ENCODE measurements at regions of chr2 and their contacts with region 1.

Region 1: GRCh38 chr2:55175254-55176025 is 56.7 kb downstream of the CLHC1 start:
- DNase-seq: peak; percentile 75 to 87
- ATAC-seq: peak; percentile 90 to 95
- H3K4me3 ChIP-seq: no peak overlapping the region
- H3K27ac ChIP-seq: no peak overlapping the region
- H3K4me1 ChIP-seq: peaks cover 4% of the 10 kb centered on the region; the same call in 1 of the 3 replicates
- CTCF ChIP-seq: peak; percentile 95
- EP300 ChIP-seq: no peak
- POLR2A ChIP-seq: no peak
- RAD21 ChIP-seq: peak; percentile 95 to 98

Region 2: DNA sequence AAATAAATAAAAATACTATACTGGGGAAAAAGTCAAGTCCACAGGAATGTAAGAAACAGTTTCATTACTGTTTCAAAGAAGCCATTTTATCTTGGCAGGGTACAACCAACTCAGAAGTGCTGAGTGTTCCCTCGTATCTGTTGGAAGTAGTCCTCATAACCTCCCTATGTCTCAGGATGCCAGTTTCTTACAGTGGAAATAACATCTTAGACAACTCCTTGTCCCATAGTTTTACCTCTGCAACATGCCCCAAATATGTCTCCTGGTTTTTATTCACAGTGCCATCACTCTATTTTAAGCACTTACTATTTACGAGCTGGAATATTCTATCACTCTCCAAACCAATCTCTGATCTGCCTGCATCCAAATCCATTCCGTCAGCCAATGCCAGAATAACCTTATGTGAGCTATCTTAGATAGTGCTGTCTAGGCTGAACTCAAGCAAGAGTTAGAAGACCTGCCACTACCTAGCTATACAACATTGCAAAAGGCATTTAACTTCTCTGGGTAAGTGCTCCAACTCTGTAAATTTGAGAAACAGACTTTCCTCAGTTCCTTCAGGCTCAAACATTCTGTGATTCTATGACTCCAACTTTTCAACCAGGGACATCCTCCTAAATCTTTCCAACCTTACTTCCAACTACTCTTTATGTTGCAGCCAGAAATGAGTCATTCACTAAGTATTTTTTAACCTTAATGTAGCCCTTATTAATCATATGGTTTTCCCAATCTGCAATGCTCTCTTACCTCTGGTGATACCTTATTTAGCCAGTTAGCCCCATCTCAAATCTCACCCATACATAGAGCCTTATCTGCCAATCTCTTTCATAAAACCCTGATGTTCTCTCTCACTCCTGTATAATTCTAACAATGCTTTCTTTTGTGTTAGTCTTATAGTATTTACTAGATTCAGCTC is 191.8 kb before region 1 on chr2:
- CTCF ChIA-PET with region 1: no interaction called
- POLR2A ChIA-PET with region 1: no interaction called
- DNase-seq: no peak
- ATAC-seq: peak; percentile 46 to 56; a peak in 3 of 6 replicates
- H3K4me3 ChIP-seq: no peak overlapping the region
- H3K27ac ChIP-seq: 0 out of 6 replicates have a peak overlapping the region, but pooled peaks of 1 of the 2 experiments have one; percentile 0
- H3K4me1 ChIP-seq: peaks cover 53% of the 10 kb centered on the region
- CTCF ChIP-seq: no peak
- EP300 ChIP-seq: no peak
- POLR2A ChIP-seq: no peak
- RAD21 ChIP-seq: no peak

Region 3: GRCh38 chr2:55026202-55026601 is 149.2 kb before region 1 on chr2:
- CTCF ChIA-PET with region 1: interaction called, 351 read pairs
- POLR2A ChIA-PET with region 1: no interaction called
- DNase-seq: no peak
- ATAC-seq: peak; percentile 23 to 27; a peak in 3 of 6 replicates
- H3K4me3 ChIP-seq: no peak overlapping the region
- H3K27ac ChIP-seq: no peak overlapping the region
- H3K4me1 ChIP-seq: peaks cover 49% of the 10 kb centered on the region
- CTCF ChIP-seq: no peak
- EP300 ChIP-seq: no peak
- POLR2A ChIP-seq: no peak
- RAD21 ChIP-seq: no peak

Region 4: GRCh38 chr2:55111570-55112228 is 63.7 kb before region 1 on chr2:
- CTCF ChIA-PET with region 1: interaction called, 148 read pairs
- POLR2A ChIA-PET with region 1: no interaction called
- DNase-seq: peak; percentile 44 to 84
- ATAC-seq: peak; percentile 74 to 75
- H3K4me3 ChIP-seq: no peak overlapping the region
- H3K27ac ChIP-seq: peak overlapping the region; percentile 92 to 93
- H3K4me1 ChIP-seq: peaks cover 94% of the 10 kb centered on the region
- CTCF ChIP-seq: no peak
- EP300 ChIP-seq: no peak
- POLR2A ChIP-seq: no peak
- RAD21 ChIP-seq: peak in 1 of 2 experiments; percentile 41; a peak in 2 of 5 replicates

Region 5: DNA sequence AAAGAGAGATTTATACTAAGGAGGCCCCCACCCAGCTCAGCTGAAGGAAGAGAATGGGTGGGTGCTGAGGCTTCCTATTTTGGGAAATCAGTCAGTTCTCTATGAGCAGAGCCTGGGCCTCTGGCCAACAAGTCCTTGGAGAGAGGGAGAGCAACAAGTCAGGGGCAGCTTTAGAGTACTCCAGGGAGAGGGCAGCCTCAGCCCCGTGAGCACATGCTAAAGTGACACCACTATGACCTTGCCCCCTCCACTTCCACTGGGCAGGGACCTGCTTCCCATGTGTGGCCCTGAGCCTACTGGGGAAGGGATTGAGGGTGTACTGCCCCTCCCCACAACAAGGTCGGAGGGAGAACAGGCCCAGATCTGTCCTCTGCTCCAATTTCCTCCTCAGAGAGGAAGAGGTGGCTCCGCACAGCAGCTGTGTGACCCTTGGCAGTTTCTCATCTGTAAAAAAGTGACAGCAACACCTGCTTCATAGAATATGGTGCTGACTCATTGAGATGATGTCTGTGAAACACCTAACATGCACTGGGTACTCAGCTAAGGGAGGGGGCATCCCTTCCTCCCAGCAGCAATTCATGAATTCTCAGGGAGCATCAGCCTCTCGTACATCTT is 16.3 kb before region 1 on chr2:
- CTCF ChIA-PET with region 1: interaction called, 127 read pairs
- POLR2A ChIA-PET with region 1: no interaction called
- DNase-seq: no peak
- ATAC-seq: no peak
- H3K4me3 ChIP-seq: no peak overlapping the region
- H3K27ac ChIP-seq: peak overlapping the region in 1 of 2 experiments; percentile 43; a peak in 2 of 6 replicates
- H3K4me1 ChIP-seq: peaks cover 45% of the 10 kb centered on the region
- CTCF ChIP-seq: no peak
- EP300 ChIP-seq: no peak
- POLR2A ChIP-seq: no peak
- RAD21 ChIP-seq: no peak

Region 6: DNA sequence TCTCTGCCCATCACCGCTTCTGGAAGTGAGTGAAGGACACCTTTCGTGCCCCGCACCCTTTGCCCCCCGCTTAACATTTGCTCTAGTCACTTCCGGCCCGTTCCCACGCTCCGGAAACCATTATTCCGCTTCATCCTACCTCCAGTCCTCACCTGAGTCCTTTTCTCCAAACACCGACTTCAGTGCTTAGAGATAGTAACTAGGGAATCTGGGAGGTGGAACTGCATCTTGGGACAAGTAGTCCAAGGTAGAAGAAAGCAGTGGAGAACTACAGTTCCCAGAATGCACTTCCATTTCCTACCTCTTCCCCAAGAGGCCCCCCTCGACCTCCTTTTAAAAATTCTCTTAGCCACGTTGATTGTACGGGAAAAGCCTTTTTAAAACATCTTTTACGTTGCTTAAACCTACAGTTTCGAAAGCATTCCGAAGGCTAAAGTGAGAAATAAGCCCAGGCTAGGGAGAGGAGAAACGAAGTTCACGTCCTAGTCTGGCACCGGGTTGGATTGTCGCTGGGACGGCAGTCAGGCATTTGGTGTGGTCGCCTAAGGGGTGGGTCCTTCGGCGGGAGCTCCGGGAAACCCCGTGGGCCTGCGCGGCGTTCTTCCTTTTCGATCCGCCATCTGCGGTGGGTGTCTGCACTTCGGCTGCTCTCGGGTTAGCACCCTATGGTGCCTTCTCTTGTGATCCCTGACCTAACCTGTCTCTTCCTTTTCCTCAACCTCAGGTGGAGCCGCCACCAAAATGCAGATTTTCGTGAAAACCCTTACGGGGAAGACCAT is 56.8 kb after region 1 on chr2 and contains the starts of genes CLHC1 and RPS27A:
- CTCF ChIA-PET with region 1: no interaction called
- POLR2A ChIA-PET with region 1: no interaction called
- DNase-seq: peak; percentile 97 to 100
- ATAC-seq: peak; percentile 97 to 98
- H3K4me3 ChIP-seq: peak within 1 kb of the TSS; percentile 82
- H3K27ac ChIP-seq: peak within 1 kb of the TSS; percentile 85 to 89
- H3K4me1 ChIP-seq: peaks cover 34% of the 10 kb centered on the region
- CTCF ChIP-seq: no peak
- EP300 ChIP-seq: no peak
- POLR2A ChIP-seq: peak; percentile 92
- RAD21 ChIP-seq: no peak
- polyA plus RNA-seq, gene CLHC1: 6.5 and 8.5 TPM in 2 replicates
- polyA plus RNA-seq, gene RPS27A: 3,746 and 4,103 TPM in 2 replicates

Region 7: GRCh38 chr2:55311444-55311870 is 136.0 kb after region 1 on chr2:
- CTCF ChIA-PET with region 1: no interaction called
- POLR2A ChIA-PET with region 1: no interaction called
- DNase-seq: peak; percentile 16 to 25
- ATAC-seq: peak; percentile 95
- H3K4me3 ChIP-seq: no peak overlapping the region
- H3K27ac ChIP-seq: no peak overlapping the region
- H3K4me1 ChIP-seq: peaks cover 12% of the 10 kb centered on the region
- CTCF ChIP-seq: no peak
- EP300 ChIP-seq: no peak
- POLR2A ChIP-seq: no peak
- RAD21 ChIP-seq: 0 out of 5 replicates have a peak, but pooled peaks of 1 of the 2 experiments have one; percentile 10

Region 8: DNA sequence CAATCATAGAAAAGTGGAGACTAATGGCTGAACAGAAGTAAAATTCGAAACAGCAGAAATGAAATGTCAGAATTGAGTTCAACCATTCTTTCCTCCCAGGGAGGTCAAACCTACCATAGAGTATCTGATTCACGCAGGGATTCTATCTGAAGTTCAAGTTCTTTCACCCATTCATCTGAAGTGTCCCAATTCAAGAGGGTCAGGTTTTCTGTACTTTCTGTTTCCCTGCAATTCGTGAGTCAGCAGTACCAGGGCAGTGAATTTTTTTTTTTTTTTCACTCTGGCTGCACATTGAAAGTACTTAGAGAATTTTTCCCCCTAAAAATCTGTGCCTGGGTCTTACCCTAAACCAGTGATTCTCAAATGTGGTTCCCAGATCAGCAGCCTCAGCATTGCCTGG is 285.1 kb after region 1 on chr2:
- CTCF ChIA-PET with region 1: no interaction called
- POLR2A ChIA-PET with region 1: no interaction called
- DNase-seq: no peak
- ATAC-seq: peak; percentile 34 to 42; a peak in 3 of 6 replicates
- H3K4me3 ChIP-seq: no peak overlapping the region
- H3K27ac ChIP-seq: no peak overlapping the region
- H3K4me1 ChIP-seq: no peaks in the 10 kb centered on the region
- CTCF ChIP-seq: no peak
- EP300 ChIP-seq: no peak
- POLR2A ChIP-seq: no peak
- RAD21 ChIP-seq: no peak

Measured in A549 (cell line).